A549 (cell line): ENCODE measurements at regions of chr20 and their contacts with region 1.

Region 1: DNA sequence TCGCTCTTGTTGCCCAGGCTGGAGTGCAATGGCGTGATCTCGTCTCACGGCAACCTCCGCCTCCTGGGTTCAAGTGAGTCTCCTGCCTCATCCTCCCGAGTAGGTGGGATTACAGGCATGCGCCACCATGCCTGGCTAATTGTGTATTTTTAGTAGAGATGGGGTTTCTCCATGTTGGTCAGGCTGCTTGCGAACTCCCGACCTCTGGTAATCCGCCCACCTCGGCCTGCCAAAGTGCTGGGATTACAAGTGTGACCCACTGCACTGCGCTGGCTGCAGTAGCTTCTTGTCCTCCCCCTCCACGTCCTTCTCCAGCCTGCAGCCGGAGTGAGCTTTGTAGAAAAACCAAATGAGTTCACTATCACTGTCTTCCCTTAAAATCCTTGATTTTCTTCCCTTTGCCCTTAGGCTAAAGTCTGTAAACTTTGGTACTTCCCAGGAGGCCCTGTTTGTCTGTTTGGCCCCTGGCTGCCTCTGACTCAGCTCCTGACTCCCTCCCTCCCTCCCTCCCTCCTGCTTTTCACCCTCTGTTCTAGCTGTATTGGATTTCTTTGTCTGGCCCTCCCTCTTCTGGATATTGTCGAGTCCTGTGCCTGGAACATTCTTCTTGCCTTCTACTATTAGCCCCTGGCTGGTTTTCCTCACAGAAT is 12.9 kb downstream of the PARD6B start:
- DNase-seq: peak; percentile 84 to 92
- ATAC-seq: peak; percentile 86 to 97
- H3K4me3 ChIP-seq: peak overlapping the region; percentile 23; the same call in 2 of the 3 replicates
- H3K27ac ChIP-seq: peak overlapping the region; percentile 86 to 94
- H3K4me1 ChIP-seq: peaks cover 90% of the 10 kb centered on the region
- CTCF ChIP-seq: peak; percentile 57
- EP300 ChIP-seq: peak in 1 of 2 experiments; percentile 24; a peak in 1 of 5 replicates
- POLR2A ChIP-seq: no peak
- RAD21 ChIP-seq: peak; percentile 81 to 84

Region 2: GRCh38 chr20:50144362-50144761 is 599.9 kb before region 1 on chr20:
- CTCF ChIA-PET with region 1: no interaction called
- POLR2A ChIA-PET with region 1: no interaction called
- DNase-seq: peak; percentile 49 to 89
- ATAC-seq: peak; percentile 89 to 90
- H3K4me3 ChIP-seq: no peak overlapping the region
- H3K27ac ChIP-seq: peak overlapping the region; percentile 91 to 95
- H3K4me1 ChIP-seq: peaks cover 72% of the 10 kb centered on the region
- CTCF ChIP-seq: no peak
- EP300 ChIP-seq: peak; percentile 69 to 75; a peak in 3 of 5 replicates
- POLR2A ChIP-seq: no peak
- RAD21 ChIP-seq: no peak

Region 3: DNA sequence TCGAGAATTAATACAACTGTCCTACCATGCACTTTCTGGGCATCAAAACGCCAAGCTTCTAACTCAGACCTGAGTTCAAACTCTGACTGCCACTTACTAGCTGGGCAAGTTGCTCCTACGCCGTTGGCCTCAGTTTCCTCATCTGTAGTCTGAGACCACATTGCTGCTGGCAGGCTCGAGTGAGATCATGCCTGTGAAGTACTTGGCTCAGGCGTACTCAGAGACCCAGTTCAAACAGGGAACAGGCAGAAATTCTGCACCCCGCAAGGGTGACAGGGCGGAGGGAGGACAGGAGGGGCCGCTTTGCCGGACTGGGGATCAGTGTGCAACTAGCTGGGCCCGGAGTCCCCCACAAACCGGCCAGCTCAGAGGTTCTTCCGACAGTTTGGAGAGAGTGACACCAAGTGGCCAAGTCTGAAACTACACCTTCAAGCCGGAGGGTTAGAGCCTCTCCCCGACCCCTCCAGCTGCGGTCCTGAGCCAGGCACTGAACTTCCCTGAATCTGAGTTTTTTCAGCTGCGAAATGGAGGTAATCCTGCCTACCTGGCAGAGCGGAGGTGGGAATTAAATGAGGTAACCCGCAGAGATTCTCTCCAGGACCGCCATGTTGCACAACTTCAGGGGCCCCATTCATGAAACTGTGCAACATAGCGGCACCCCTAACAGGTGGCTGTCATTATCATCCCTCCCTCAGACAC is 280.1 kb before region 1 on chr20:
- CTCF ChIA-PET with region 1: no interaction called
- POLR2A ChIA-PET with region 1: no interaction called
- DNase-seq: peak; percentile 57 to 59
- ATAC-seq: peak; percentile 78 to 83
- H3K4me3 ChIP-seq: no peak overlapping the region
- H3K27ac ChIP-seq: peak overlapping the region; percentile 91 to 94
- H3K4me1 ChIP-seq: peaks cover 50% of the 10 kb centered on the region
- CTCF ChIP-seq: peak; percentile 85
- EP300 ChIP-seq: no peak
- POLR2A ChIP-seq: no peak
- RAD21 ChIP-seq: peak; percentile 87 to 94

Region 4: DNA sequence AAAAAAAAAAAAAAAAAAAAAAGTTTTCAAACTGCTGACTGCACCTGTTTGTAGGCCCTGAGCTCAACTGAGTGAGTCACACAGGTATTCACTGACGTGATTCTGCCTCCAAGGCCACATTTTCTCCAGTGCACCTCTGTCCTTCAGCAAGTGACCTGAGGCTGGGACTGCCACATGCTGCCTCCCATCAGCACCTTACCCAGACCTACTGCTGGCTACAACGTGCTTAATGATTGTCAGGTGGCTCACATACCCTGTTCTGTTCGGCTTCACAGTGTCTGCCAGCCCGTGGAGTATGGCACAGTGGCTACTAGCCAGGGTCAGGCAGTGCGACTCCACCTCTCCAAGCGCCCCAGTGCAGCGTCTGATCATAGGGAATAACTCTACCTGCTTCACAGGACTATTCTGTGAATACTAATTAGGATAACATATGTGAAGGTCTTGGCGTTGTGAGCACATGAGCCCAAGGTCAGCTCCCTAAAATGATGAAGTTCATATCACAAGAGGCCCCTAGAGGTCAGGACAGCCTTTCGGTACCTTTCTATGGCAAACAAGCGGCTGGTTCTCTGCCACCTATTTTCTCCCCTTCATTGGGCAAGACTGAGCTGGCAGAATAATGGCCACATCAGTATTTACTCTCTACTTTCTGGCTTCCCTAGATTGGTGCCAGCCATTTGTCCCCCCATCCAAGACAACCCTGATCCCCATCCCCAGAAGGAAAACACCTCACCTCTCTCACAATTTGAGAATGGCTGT is 81.0 kb before region 1 on chr20:
- CTCF ChIA-PET with region 1: interaction called, 32 read pairs
- POLR2A ChIA-PET with region 1: no interaction called
- DNase-seq: peak in 1 of 2 experiments; percentile 79
- ATAC-seq: peak; percentile 81 to 86
- H3K4me3 ChIP-seq: no peak overlapping the region
- H3K27ac ChIP-seq: peak overlapping the region; percentile 56 to 72; a peak in 5 of 6 replicates
- H3K4me1 ChIP-seq: peaks cover 42% of the 10 kb centered on the region
- CTCF ChIP-seq: peak; percentile 65
- EP300 ChIP-seq: no peak
- POLR2A ChIP-seq: no peak
- RAD21 ChIP-seq: peak; percentile 82 to 86

Region 5: GRCh38 chr20:50670126-50670862 is 74.0 kb before region 1 on chr20:
- CTCF ChIA-PET with region 1: interaction called, 25 read pairs
- POLR2A ChIA-PET with region 1: no interaction called
- DNase-seq: peak; percentile 75 to 84
- ATAC-seq: peak; percentile 92
- H3K4me3 ChIP-seq: no peak overlapping the region
- H3K27ac ChIP-seq: peak overlapping the region; percentile 77 to 88
- H3K4me1 ChIP-seq: peaks cover 32% of the 10 kb centered on the region
- CTCF ChIP-seq: no peak
- EP300 ChIP-seq: no peak
- POLR2A ChIP-seq: no peak
- RAD21 ChIP-seq: peak; percentile 24 to 43; a peak in 3 of 5 replicates

Region 6: DNA sequence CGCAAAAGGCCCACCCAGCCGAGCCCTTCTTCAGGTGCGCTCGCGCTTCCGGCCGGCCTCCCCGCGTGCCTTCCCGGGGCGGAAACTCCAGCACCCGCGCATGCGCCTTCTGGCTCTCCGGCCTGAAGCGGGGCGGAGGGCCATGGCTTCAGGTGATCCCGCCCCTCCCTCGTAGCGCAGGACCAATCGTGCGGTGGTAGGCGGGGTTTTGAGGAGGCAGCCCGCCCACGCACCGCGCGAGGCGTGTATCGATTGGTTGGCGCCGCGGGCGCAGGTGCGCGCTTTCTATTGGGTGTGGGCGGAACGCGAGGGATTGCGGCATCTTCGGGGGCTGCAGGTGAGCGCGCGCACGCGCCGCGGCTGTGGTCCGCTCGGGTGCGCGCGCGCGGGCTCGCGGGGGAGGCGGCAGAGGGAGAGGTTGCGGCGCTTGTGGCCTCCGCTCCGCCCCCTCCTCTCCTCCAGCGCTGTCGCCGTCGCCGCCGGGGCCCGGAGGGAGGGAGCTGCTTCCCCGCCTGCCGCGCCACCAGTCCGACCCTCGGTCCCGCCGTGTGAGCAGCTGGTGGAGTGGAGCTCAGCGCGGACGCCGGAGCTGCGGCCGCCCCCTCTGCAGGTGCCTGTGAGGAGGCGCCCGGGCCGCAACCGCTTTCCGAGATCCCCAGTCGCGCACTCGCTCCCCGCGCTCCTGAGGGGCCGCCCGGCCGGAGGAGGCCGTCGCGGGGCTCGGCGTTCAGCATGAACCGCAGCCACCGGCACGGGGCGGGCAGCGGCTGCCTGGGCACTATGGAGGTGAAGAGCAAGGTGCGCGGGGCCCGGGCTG is 13.0 kb before region 1 on chr20 and contains the start of gene PARD6B:
- CTCF ChIA-PET with region 1: interaction called, 46 read pairs
- POLR2A ChIA-PET with region 1: interaction called, 9 read pairs
- DNase-seq: peak; percentile 96 to 100
- ATAC-seq: peak; percentile 76 to 86
- H3K4me3 ChIP-seq: peak within 1 kb of the TSS; percentile 90
- H3K27ac ChIP-seq: peak within 1 kb of the TSS; percentile 96
- H3K4me1 ChIP-seq: peaks cover 68% of the 10 kb centered on the region
- CTCF ChIP-seq: no peak
- EP300 ChIP-seq: no peak
- POLR2A ChIP-seq: peak; percentile 74
- RAD21 ChIP-seq: 0 out of 5 replicates have a peak, but pooled peaks of 1 of the 2 experiments have one; percentile 11
- polyA plus RNA-seq, gene PARD6B: 6.2 and 6.4 TPM in 2 replicates

Region 7: GRCh38 chr20:50756447-50756930 is 12.2 kb after region 1 on chr20:
- CTCF ChIA-PET with region 1: interaction called, 36 read pairs
- POLR2A ChIA-PET with region 1: interaction called, 6 read pairs
- DNase-seq: no peak
- ATAC-seq: no peak
- H3K4me3 ChIP-seq: no peak overlapping the region
- H3K27ac ChIP-seq: peak overlapping the region; percentile 18 to 46; a peak in 3 of 6 replicates
- H3K4me1 ChIP-seq: peaks cover 41% of the 10 kb centered on the region
- CTCF ChIP-seq: no peak
- EP300 ChIP-seq: no peak
- POLR2A ChIP-seq: no peak
- RAD21 ChIP-seq: no peak

Region 8: GRCh38 chr20:50762435-50763201 is 18.4 kb after region 1 on chr20:
- CTCF ChIA-PET with region 1: interaction called, 36 read pairs
- POLR2A ChIA-PET with region 1: interaction called, 6 read pairs
- DNase-seq: peak; percentile 51 to 91
- ATAC-seq: peak; percentile 61 to 72
- H3K4me3 ChIP-seq: 0 out of 3 replicates have a peak overlapping the region, but pooled peaks have one; percentile 4
- H3K27ac ChIP-seq: peak overlapping the region; percentile 96 to 98
- H3K4me1 ChIP-seq: peaks cover 66% of the 10 kb centered on the region
- CTCF ChIP-seq: no peak
- EP300 ChIP-seq: peak; percentile 40 to 85; a peak in 3 of 5 replicates
- POLR2A ChIP-seq: no peak
- RAD21 ChIP-seq: 0 out of 5 replicates have a peak, but pooled peaks have one; percentile 5 to 22